ENCODE measurements at regions of chr1 and their contacts with region 1.

Region 1: GRCh38 chr1:160193091-160193819 is 2.9 kb downstream of the CASQ1 start:
- DNase-seq: peak; percentile 86 to 92
- ATAC-seq: peak; percentile 83 to 91 (median 88)
- H3K4me3 ChIP-seq: no peak overlapping the region
- H3K27ac ChIP-seq: peak overlapping the region in 7 of 10 donors; percentile 59 to 87 (median 79)
- H3K4me1 ChIP-seq: peaks cover 9 to 58% (median 18%) of the 10 kb centered on the region in 9 donors
- H3K27me3 ChIP-seq: no peaks in the 10 kb centered on the region
- CTCF ChIP-seq: peak; percentile 94 to 98 (median 96)

Region 2: GRCh38 chr1:160117709-160118183 is 75.5 kb before region 1 on chr1:
- intact Hi-C with region 1: loop called in 1 of 10 experiments (anchors 5 kb)
- DNase-seq: peak; percentile 48 to 54
- ATAC-seq: peak in 7 of 8 donors; percentile 35 to 75 (median 61)
- H3K4me3 ChIP-seq: peak overlapping the region; percentile 25 to 68 (median 54)
- H3K27ac ChIP-seq: peak overlapping the region in 8 of 10 donors; percentile 72 to 91 (median 84)
- H3K4me1 ChIP-seq: peaks cover 7 to 68% (median 42%) of the 10 kb centered on the region in 9 donors
- H3K27me3 ChIP-seq: no peaks in the 10 kb centered on the region
- CTCF ChIP-seq: no peak

Region 3: DNA sequence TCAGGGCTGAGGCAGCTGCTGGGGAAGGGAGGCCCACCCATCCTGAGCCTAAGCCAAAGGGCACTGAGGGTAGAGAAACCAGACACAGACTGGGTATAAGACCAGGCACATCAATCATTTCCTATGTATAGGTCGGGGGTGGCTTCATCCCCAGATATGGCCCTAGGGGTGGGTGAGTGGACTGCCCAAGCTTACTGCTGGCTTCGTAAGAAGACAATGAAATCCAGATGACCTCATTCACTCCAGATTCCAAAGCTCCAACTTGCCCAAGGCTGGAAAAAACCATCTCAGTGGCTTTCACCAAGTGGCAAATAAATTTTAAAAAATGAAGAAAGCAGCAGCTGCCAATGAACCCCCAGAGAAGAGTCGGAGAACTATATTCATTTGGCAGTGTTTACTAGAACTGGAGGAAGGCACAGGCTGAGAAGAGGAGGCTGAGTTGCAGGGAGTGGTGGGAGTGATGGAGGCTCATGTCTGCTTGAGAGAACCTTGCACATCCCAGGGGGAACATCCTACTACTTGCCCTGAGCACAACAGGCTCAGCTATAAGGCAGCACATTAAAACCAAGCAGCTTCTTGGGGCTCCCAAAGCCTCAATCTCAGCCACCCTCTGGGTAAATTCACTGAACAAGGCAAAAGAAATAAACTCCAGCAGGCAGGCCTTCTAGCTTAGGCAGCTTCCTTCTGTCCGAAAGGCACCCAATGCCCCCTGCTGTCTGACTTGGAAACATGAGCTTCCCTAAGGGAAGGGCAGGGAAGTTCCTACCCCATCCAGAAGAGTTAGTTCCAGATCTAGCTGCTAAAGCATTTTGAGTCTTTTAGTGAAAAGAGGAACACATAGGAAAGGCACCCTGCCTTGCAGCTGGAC is 26.0 kb after region 1 on chr1:
- intact Hi-C with region 1: loop called in 6 of 10 experiments (anchors 1 to 2 kb)
- DNase-seq: peak in 1 of 2 donors; percentile 69
- ATAC-seq: peak; percentile 71 to 90 (median 87)
- H3K4me3 ChIP-seq: no peak overlapping the region
- H3K27ac ChIP-seq: peak overlapping the region in 9 of 10 donors; percentile 40 to 80 (median 66)
- H3K4me1 ChIP-seq: peaks cover 4 to 54% (median 47%) of the 10 kb centered on the region in 9 donors
- H3K27me3 ChIP-seq: no peaks in the 10 kb centered on the region
- CTCF ChIP-seq: peak; percentile 31 to 82 (median 73)

Region 4: GRCh38 chr1:160244209-160244608 is 51.0 kb after region 1 on chr1:
- intact Hi-C with region 1: loop called in 1 of 10 experiments (anchors 10 kb)
- DNase-seq: no peak
- ATAC-seq: peak in 1 of 8 donors; percentile 36
- H3K4me3 ChIP-seq: no peak overlapping the region
- H3K27ac ChIP-seq: peak overlapping the region in 8 of 10 donors; percentile 12 to 61 (median 50)
- H3K4me1 ChIP-seq: peaks cover 0 to 60% (median 49%) of the 10 kb centered on the region in 9 donors
- H3K27me3 ChIP-seq: no peaks in the 10 kb centered on the region
- CTCF ChIP-seq: no peak

Region 5: GRCh38 chr1:160251687-160252526 is 58.7 kb after region 1 on chr1:
- intact Hi-C with region 1: loop called (anchors 1 to 10 kb)
- DNase-seq: peak in 1 of 2 donors; percentile 78
- ATAC-seq: peak; percentile 88 to 97 (median 93)
- H3K4me3 ChIP-seq: no peak overlapping the region
- H3K27ac ChIP-seq: peak overlapping the region in 6 of 10 donors; percentile 15 to 51 (median 44)
- H3K4me1 ChIP-seq: peaks cover 0 to 54% (median 30%) of the 10 kb centered on the region in 9 donors
- H3K27me3 ChIP-seq: no peaks in the 10 kb centered on the region
- CTCF ChIP-seq: peak; percentile 42 to 84 (median 71)

Region 6: GRCh38 chr1:160291248-160292220 is 98.3 kb after region 1 on chr1:
- intact Hi-C with region 1: loop called in 7 of 10 experiments (anchors 1 to 5 kb)
- DNase-seq: peak; percentile 24 to 65
- ATAC-seq: peak; percentile 57 to 90 (median 87)
- H3K4me3 ChIP-seq: no peak overlapping the region
- H3K27ac ChIP-seq: peak overlapping the region in 1 of 10 donors; percentile 2
- H3K4me1 ChIP-seq: peaks cover 0 to 5% (median 0%) of the 10 kb centered on the region in 9 donors
- H3K27me3 ChIP-seq: no peaks in the 10 kb centered on the region
- CTCF ChIP-seq: peak; percentile 69 to 87 (median 81)

Region 7: GRCh38 chr1:160376525-160377131 is 183.4 kb after region 1 on chr1:
- intact Hi-C with region 1: loop called in 1 of 10 experiments (anchors 10 kb)
- DNase-seq: peak in 1 of 2 donors; percentile 42
- ATAC-seq: peak; percentile 64 to 87 (median 82)
- H3K4me3 ChIP-seq: peak overlapping the region in 1 of 10 donors; percentile 13
- H3K27ac ChIP-seq: peak overlapping the region in 1 of 10 donors; percentile 56
- H3K4me1 ChIP-seq: peaks cover 5 to 28% (median 10%) of the 10 kb centered on the region in 9 donors
- H3K27me3 ChIP-seq: peaks cover 0 to 18% (median 0%) of the 10 kb centered on the region in 7 donors
- CTCF ChIP-seq: peak; percentile 72 to 92 (median 85)